Activated naive CD4-positive, alpha-beta T cell treated with anti-CD3 and anti-CD28 coated beads for 36 hours (primary cell): ENCODE measurements at regions of chr12 and their contacts with region 1.

Region 1: GRCh38 chr12:48165094-48165981 is 8.0 kb upstream of the ASB8 start:
- DNase-seq: peak; percentile 72
- H3K4me3 Mint-ChIP-seq: no peak overlapping the region
- H3K27ac Mint-ChIP-seq: no peak overlapping the region
- H3K4me1 Mint-ChIP-seq: peaks cover 9% of the 10 kb centered on the region
- H3K27me3 Mint-ChIP-seq: no peaks in the 10 kb centered on the region

Region 2: DNA sequence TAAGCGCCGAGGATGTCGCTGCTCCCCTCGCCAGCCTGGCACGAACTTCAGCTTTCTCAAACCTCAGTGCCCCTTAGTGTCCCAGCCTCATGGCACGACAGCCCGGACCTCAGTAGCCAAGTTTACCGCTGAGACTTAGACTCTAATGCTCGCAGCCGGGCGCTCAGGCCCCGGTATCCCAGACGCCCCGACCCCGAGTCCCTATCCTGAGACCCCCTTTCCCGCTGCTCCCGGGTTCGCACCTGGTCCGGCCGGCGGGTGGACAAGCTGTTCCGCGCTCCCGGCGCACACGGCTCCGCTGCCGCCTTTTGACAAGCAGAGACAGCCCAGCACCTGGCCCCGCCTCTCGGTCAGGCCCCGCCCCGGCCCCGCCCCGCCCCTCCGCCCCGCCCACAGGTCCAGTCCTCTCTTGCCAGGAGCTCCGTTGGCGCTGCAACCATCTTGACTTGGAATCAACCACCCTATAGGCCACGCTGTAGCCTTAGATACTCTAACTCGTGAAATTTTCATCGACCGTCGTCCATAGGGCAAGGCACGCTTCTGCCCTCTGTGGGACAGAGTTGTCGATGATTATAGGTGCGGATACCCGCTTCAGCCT is 260.5 kb before region 1 on chr12 and contains the start of gene VDR:
- CTCF ChIA-PET with region 1: interaction called, 3 read pairs
- intact Hi-C with region 1: loop called (anchors 1 kb)
- DNase-seq: peak; percentile 81
- H3K4me3 Mint-ChIP-seq: peak within 1 kb of the TSS; percentile 98
- H3K27ac Mint-ChIP-seq: peak within 1 kb of the TSS; percentile 93
- H3K4me1 Mint-ChIP-seq: peaks cover 42% of the 10 kb centered on the region
- H3K27me3 Mint-ChIP-seq: peaks cover 19% of the 10 kb centered on the region
- total RNA-seq, gene VDR: 56.4 to 57.7 TPM

Region 3: DNA sequence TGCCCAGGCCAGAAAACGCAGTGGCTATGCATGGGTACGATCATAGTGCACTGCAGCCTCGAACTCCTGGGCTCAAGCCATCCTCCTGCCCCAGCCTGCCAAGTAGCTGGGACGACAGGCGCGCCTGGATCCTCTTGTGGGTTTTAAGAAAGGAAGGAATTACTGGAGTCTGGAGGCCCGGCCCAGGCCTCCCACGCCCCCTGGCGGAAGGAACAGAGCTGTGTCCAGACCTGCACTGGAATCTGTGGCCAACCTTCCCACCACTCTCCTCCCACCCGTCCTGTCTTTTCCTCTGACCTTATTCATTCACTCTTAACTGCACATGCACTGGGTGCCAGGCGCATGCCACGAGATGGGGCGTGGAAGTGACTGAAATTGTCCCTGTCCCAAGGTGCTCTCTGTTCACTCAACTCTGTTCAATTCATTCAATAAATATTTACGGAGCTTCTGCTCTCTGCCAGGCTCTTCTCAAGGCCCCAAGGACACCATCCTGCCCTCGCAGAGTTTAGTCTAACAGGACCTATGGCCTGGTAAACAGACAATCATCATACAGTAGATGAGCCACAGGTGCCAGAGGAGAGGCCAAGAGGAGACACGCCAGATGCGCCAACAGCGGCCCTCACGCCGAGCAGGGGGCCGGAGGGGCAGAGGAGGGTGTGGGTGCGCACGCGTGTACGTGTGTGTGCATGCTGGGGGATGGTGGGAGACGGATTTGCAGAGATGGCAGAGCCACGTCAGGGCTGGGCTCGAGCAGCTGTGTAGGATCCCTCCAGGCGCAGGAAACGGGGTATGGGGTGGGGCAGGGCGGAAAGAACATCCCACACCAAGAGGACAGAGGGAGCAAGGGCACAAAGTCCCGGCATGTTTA is 215.7 kb before region 1 on chr12:
- CTCF ChIA-PET with region 1: interaction called, 3 read pairs
- intact Hi-C with region 1: loop called (anchors 5 kb)
- DNase-seq: peak; percentile 72
- H3K4me3 Mint-ChIP-seq: no peak overlapping the region
- H3K27ac Mint-ChIP-seq: no peak overlapping the region
- H3K4me1 Mint-ChIP-seq: peaks cover 4% of the 10 kb centered on the region
- H3K27me3 Mint-ChIP-seq: no peaks in the 10 kb centered on the region

Region 4: DNA sequence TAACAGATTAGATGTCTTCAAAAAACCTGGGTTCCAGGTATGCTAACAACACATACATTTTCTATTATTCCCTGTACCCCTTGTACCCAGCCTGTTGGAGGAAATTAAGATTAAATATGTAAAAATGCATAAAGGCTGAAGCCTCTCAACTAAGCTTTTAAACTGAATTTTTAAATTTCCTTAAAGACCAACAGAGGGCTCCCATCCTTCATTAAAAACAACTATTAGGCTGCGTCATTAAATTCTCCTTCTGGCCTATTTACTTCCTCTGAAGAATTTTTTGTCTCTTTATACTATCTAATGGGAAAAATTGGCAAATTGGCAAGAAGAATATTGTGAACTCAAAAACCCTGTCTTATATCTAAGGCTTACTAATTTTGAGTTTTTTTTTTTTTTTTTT is 81.3 kb before region 1 on chr12:
- CTCF ChIA-PET with region 1: interaction called, 3 read pairs
- intact Hi-C with region 1: loop called (anchors 1 kb)
- DNase-seq: no peak
- H3K4me3 Mint-ChIP-seq: no peak overlapping the region
- H3K27ac Mint-ChIP-seq: no peak overlapping the region
- H3K4me1 Mint-ChIP-seq: no peaks in the 10 kb centered on the region
- H3K27me3 Mint-ChIP-seq: no peaks in the 10 kb centered on the region

Region 5: DNA sequence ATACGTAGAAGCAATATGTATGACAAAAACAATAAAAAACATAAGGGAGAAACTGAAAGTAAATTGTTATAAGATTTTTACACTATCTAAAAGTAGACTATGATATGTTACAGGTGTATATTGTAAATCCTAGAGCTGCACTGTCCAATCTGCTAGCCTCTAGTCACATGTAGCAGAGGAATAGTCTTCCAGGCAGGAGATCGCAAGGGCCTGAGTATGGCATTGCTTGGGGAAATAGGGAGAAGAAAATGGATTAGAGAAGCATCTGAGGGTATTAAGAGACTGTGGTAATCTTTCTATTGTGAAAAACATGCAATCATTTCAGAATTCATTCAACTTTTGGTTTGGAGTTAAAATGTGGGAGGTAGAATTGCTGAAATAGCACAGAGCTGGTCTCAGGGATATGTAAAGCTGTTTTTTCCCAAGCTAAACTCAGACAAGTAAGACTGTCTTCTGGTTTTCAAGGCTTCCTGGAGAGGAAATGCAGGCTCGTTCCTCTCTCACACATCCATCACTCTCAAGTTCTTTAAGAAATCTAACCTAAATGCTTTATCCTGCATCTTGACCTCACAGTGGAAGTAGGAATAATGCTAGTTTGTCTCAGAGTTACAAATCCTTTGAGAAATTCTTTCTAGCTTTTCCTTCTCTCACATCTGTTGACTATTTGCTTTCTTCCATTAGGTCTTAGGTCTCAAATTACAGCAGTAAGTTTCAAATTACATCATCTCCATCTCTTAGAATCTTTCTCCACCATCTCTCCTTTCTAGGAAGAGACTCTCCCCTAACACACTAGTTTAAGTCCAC is 10.5 kb after region 1 on chr12:
- CTCF ChIA-PET with region 1: interaction called, 12 read pairs
- intact Hi-C with region 1: no loop called
- DNase-seq: no peak
- H3K4me3 Mint-ChIP-seq: peak overlapping the region; percentile 32
- H3K27ac Mint-ChIP-seq: no peak overlapping the region
- H3K4me1 Mint-ChIP-seq: peaks cover 8% of the 10 kb centered on the region
- H3K27me3 Mint-ChIP-seq: peaks cover 2% of the 10 kb centered on the region

Region 6: GRCh38 chr12:48489012-48489411 is 323.7 kb after region 1 on chr12:
- CTCF ChIA-PET with region 1: no interaction called
- intact Hi-C with region 1: no loop called
- DNase-seq: no peak
- H3K4me3 Mint-ChIP-seq: no peak overlapping the region
- H3K27ac Mint-ChIP-seq: no peak overlapping the region
- H3K4me1 Mint-ChIP-seq: peaks cover 4% of the 10 kb centered on the region
- H3K27me3 Mint-ChIP-seq: no peaks in the 10 kb centered on the region